GM12878 (cell line): ENCODE measurements at regions of chr16 and their contacts with region 1.

Region 1: GRCh38 chr16:87778830-87779579 is 13.2 kb upstream of the KLHDC4 start:
- DNase-seq: peak; percentile 80
- ATAC-seq: peak; percentile 77
- H3K4me3 ChIP-seq: no peak overlapping the region; the same call in 1 of the 2 replicates
- H3K27ac ChIP-seq: peak overlapping the region; percentile 72
- H3K4me1 ChIP-seq: peaks cover 56% of the 10 kb centered on the region
- H3K27me3 ChIP-seq: no peaks in the 10 kb centered on the region
- CTCF ChIP-seq: peak; percentile 92 to 98 (median 98); a peak in 5 of 6 replicates
- EP300 ChIP-seq: peak; percentile 52 to 53; a peak in 2 of 4 replicates
- POLR2A ChIP-seq: peak; percentile 73
- RAD21 ChIP-seq: peak; percentile 100

Region 2: GRCh38 chr16:87765776-87766484 is 13.1 kb before region 1 on chr16 and contains the start of gene KLHDC4:
- CTCF ChIA-PET with region 1: interaction called, 16 read pairs
- POLR2A ChIA-PET with region 1: interaction called, 4 read pairs
- RAD21 ChIA-PET with region 1: interaction called, 18 read pairs
- SMC1A ChIA-PET with region 1: interaction called, 20 read pairs
- in situ Hi-C with region 1: no loop called
- intact Hi-C with region 1: no loop called
- DNase-seq: peak; percentile 38
- ATAC-seq: peak; percentile 90
- H3K4me3 ChIP-seq: peak within 1 kb of the TSS; percentile 89
- H3K27ac ChIP-seq: peak within 1 kb of the TSS; percentile 93
- H3K4me1 ChIP-seq: peaks cover 6% of the 10 kb centered on the region
- H3K27me3 ChIP-seq: no peaks in the 10 kb centered on the region
- CTCF ChIP-seq: no peak
- EP300 ChIP-seq: no peak
- POLR2A ChIP-seq: peak; percentile 95
- RAD21 ChIP-seq: no peak
- polyA plus RNA-seq, gene KLHDC4: 0.80 to 4.1 TPM

Region 3: GRCh38 chr16:87806603-87807546 is 27.9 kb after region 1 on chr16:
- CTCF ChIA-PET with region 1: interaction called, 153 read pairs
- POLR2A ChIA-PET with region 1: interaction called, 39 read pairs
- RAD21 ChIA-PET with region 1: interaction called, 138 read pairs
- SMC1A ChIA-PET with region 1: interaction called, 53 read pairs
- in situ Hi-C with region 1: no loop called
- intact Hi-C with region 1: loop called (anchors 1 kb)
- DNase-seq: no peak
- ATAC-seq: peak; percentile 17
- H3K4me3 ChIP-seq: peak overlapping the region; percentile 24; the same call in 1 of the 2 replicates
- H3K27ac ChIP-seq: peak overlapping the region; percentile 78
- H3K4me1 ChIP-seq: peaks cover 58% of the 10 kb centered on the region
- H3K27me3 ChIP-seq: no peaks in the 10 kb centered on the region
- CTCF ChIP-seq: no peak
- EP300 ChIP-seq: no peak
- POLR2A ChIP-seq: peak; percentile 22
- RAD21 ChIP-seq: no peak

Region 4: DNA sequence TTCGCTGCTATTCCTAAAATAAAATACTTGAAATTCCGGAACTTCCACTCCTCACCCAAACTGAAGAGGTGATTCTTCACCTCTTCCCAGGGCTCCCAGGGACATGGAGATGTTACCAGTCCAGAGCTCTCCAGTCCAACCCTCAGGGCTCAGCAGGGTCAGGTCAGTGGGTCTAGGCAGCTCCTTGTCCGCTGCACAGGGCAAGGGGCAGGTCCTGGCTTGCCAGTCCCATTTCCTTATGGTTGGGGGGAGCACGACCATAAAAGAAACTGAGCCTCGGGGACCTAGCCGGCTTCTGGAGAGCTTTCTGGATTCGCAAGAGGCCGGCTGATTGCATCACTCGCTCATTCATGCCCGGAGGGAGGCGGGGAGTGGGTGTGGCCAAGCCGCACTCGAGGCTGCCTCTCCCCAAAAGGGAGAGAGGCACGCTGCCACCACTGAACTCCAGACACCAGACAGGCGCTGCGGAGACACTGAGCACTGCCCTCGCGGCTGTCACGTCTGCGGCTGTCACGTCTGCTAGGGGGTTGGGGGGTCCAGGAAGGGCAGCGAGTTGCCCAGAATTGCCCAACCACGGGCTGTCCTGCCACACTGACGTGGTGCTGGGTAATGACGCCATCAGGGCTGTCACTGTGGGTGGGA is 74.5 kb after region 1 on chr16:
- CTCF ChIA-PET with region 1: interaction called, 83 read pairs
- POLR2A ChIA-PET with region 1: interaction called, 7 read pairs
- RAD21 ChIA-PET with region 1: interaction called, 55 read pairs
- SMC1A ChIA-PET with region 1: interaction called, 63 read pairs
- in situ Hi-C with region 1: loop called (anchors 5 kb)
- intact Hi-C with region 1: loop called (anchors 5 kb)
- DNase-seq: peak; percentile 57
- ATAC-seq: peak; percentile 78
- H3K4me3 ChIP-seq: peak overlapping the region; percentile 8; the same call in 1 of the 2 replicates
- H3K27ac ChIP-seq: peak overlapping the region; percentile 67
- H3K4me1 ChIP-seq: peaks cover 42% of the 10 kb centered on the region
- H3K27me3 ChIP-seq: no peaks in the 10 kb centered on the region
- CTCF ChIP-seq: no peak
- EP300 ChIP-seq: no peak
- POLR2A ChIP-seq: peak; percentile 93
- RAD21 ChIP-seq: no peak

Region 5: DNA sequence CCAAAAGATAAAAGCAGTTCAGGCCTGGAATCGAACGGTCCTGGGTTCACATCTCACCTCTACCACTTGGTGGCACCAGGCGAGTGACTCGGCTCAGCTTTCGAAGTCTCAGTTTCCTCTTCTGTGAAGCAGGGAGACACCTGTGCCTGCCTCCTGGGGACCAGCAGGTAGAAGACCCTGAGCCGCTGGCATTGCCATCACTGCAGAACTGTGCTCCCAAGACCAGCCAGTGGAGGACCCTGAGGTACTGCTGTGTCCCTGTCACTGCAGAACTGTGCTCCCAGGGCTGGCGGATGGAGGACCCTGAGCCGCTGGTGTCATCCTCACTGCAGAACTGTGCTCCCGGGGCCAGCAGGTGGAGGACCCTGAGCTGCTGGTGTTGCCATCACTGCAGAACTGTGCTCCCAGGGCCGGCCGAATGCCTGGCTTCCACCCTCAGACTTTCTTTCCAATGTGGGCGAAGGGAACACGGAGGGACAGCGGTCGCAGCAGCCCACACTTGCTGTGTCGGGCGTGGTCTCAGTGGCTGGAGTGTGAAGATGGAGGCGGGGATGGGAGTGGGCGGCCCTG is 99.0 kb after region 1 on chr16:
- CTCF ChIA-PET with region 1: interaction called, 553 read pairs
- POLR2A ChIA-PET with region 1: no interaction called
- RAD21 ChIA-PET with region 1: interaction called, 406 read pairs
- SMC1A ChIA-PET with region 1: interaction called, 301 read pairs
- in situ Hi-C with region 1: loop called (anchors 5 kb)
- intact Hi-C with region 1: no loop called
- DNase-seq: no peak
- ATAC-seq: peak; percentile 57
- H3K4me3 ChIP-seq: no peak overlapping the region
- H3K27ac ChIP-seq: no peak overlapping the region
- H3K4me1 ChIP-seq: peaks cover 6% of the 10 kb centered on the region
- H3K27me3 ChIP-seq: no peaks in the 10 kb centered on the region; a peak in 1 of 4 replicates
- CTCF ChIP-seq: peak; percentile 29 to 41 (median 34); a peak in 4 of 6 replicates
- EP300 ChIP-seq: no peak
- POLR2A ChIP-seq: no peak
- RAD21 ChIP-seq: peak; percentile 44

Region 6: DNA sequence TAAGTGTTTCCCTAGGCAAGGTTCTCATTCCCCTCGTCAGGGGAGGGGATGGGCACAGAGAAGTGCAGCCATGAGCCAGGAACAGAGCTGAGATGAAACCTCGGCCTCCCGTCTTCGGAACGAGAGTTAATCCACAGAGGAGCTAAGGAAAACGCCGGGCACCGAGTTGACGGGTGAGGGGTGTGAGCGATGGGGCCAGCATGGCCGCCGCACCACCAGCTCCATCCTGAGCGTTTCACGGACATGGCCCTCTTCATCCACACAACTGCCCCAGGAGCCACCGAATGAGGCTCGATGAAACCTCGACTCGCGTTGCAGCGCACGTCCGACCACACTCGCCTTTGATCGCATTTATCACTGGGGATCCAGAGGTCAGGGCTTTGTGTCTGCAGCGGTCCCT is 135.8 kb after region 1 on chr16:
- CTCF ChIA-PET with region 1: interaction called, 47 read pairs
- POLR2A ChIA-PET with region 1: no interaction called
- RAD21 ChIA-PET with region 1: interaction called, 6 read pairs
- SMC1A ChIA-PET with region 1: interaction called, 16 read pairs
- in situ Hi-C with region 1: no loop called
- intact Hi-C with region 1: no loop called
- DNase-seq: no peak
- ATAC-seq: no peak
- H3K4me3 ChIP-seq: no peak overlapping the region
- H3K27ac ChIP-seq: no peak overlapping the region
- H3K4me1 ChIP-seq: no peaks in the 10 kb centered on the region
- H3K27me3 ChIP-seq: no peaks in the 10 kb centered on the region
- CTCF ChIP-seq: no peak
- EP300 ChIP-seq: no peak
- POLR2A ChIP-seq: no peak
- RAD21 ChIP-seq: no peak

Region 7: DNA sequence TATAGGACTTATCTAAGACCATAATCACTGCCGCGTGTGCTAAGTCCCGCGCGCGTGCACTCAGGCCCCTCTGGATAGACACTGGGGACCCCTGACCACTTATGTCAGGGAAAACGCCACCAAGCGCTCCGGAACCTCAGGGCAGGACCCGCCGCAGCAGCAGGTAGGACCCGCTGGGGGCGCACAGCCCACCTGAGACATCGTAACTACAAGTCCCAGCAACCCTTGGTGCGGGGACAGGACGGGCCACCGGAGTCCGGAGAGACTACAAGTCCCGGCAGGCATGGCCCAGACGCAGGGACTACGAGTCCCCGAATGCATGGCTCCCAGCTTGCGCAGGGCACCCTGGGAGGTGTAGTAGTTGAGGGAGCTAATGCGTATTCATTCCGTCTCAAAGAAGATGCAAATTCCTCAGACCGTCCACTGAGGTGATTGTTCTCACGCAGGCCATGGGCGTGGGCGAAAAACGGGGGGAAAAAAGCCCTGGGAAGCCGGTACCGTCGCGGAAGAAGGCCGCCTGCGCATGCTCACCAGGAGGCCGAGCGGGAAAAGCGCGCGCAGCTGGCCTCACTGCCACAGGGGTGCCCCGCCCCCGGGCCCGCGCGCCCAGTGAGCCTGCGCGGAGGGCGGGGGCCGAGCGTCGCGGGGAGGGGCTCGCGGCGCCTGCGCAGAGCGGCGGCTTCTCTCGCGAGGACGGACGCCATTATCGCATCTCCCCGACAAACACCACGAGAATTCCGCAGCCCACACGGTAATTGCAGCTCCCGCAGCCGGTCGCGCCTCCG is 172.0 kb after region 1 on chr16 and contains the start of gene BANP:
- CTCF ChIA-PET with region 1: interaction called, 5 read pairs
- POLR2A ChIA-PET with region 1: no interaction called
- RAD21 ChIA-PET with region 1: interaction called, 5 read pairs
- SMC1A ChIA-PET with region 1: interaction called, 5 read pairs
- in situ Hi-C with region 1: no loop called
- intact Hi-C with region 1: loop called (anchors 5 kb)
- DNase-seq: peak; percentile 97
- ATAC-seq: peak; percentile 97
- H3K4me3 ChIP-seq: peak within 1 kb of the TSS; percentile 91
- H3K27ac ChIP-seq: peak within 1 kb of the TSS; percentile 98
- H3K4me1 ChIP-seq: peaks cover 14% of the 10 kb centered on the region
- H3K27me3 ChIP-seq: no peaks in the 10 kb centered on the region
- CTCF ChIP-seq: peak; percentile 46 to 76 (median 52)
- EP300 ChIP-seq: no peak
- POLR2A ChIP-seq: peak; percentile 62; the same call in 1 of the 2 replicates
- RAD21 ChIP-seq: no peak
- polyA plus RNA-seq, gene BANP: 3.9 to 7.3 TPM